Prostate gland (tissue), 2 donors: ENCODE measurements at regions of chr6 and their contacts with region 1.

Region 1: DNA sequence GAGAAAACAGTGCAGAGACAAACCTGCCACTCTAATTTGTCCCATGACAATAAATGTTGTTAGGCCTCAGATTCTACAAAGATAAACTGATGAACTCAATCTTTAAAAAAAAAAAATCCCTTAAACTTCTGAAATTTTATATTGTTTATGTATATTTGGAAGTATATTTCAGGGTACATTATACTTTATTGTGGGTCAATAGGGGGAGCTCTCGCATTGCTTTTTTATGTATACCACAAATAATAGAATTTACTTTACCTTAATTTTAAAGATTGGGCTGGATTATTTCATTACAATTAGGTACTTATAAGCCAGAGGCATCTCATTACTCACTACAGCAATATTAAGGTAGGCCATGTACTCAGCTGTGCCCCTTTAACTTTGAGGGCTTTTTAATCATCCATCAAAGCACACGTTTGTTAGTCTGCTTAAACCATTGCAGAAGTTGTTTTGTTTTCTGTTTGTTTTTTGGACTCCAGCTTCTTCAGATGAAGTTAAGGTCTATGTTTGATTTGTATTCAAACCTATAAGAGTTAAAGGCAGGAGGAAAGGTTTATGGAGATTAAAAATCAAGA is 56.3 kb upstream of the EYA4 start:
- DNase-seq: no peak
- H3K4me3 ChIP-seq: no peak overlapping the region
- H3K27ac ChIP-seq: no peak overlapping the region
- H3K4me1 ChIP-seq: no peaks in the 10 kb centered on the region
- H3K27me3 ChIP-seq: no peaks in the 10 kb centered on the region
- CTCF ChIP-seq: peak in 3 of 4 experiments; percentile 29 to 35 (median 34)
- POLR2A ChIP-seq: no peak

Region 2: GRCh38 chr6:132830334-132830751 is 354.5 kb before region 1 on chr6:
- intact Hi-C with region 1: loop called (anchors 10 kb)
- DNase-seq: no peak
- H3K4me3 ChIP-seq: no peak overlapping the region
- H3K27ac ChIP-seq: no peak overlapping the region
- H3K4me1 ChIP-seq: no peaks in the 10 kb centered on the region
- H3K27me3 ChIP-seq: no peaks in the 10 kb centered on the region
- CTCF ChIP-seq: peak in 3 of 4 experiments; percentile 36 to 55 (median 53)
- POLR2A ChIP-seq: no peak

Region 3: DNA sequence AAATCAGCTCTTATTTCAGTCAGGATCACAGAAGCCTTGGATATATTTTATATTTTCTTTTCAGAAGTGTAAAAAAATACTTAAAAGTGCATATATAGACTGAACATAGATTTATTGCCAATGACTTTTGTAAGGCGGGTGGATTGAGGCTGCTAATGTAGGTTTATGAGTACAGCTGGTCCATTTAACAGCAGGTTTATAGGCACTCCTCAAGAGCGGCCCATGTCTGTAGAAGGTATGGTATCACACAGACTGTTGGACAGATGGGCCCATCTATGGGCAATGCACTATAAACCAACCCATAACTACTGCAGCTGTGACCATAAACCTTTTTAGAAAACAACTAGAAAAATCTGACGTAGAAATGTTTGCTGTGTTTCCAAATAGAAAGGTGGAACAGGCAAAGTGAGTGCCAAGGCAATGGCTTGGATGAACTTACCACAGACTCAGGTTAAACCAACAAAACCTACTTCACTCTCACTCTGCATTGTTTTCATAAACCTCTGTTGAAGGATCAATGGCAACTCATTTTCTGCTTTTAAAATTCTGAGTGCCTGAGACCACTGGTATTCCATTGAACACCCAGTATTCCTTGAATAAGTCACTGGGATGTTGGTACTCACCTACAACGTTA is 114.4 kb before region 1 on chr6:
- intact Hi-C with region 1: no loop called
- DNase-seq: peak; percentile 30
- H3K4me3 ChIP-seq: no peak overlapping the region
- H3K27ac ChIP-seq: peak overlapping the region in 1 of 2 donors; percentile 26
- H3K4me1 ChIP-seq: no peaks in the 10 kb centered on the region
- H3K27me3 ChIP-seq: no peaks in the 10 kb centered on the region
- CTCF ChIP-seq: no peak
- POLR2A ChIP-seq: no peak

Region 4: DNA sequence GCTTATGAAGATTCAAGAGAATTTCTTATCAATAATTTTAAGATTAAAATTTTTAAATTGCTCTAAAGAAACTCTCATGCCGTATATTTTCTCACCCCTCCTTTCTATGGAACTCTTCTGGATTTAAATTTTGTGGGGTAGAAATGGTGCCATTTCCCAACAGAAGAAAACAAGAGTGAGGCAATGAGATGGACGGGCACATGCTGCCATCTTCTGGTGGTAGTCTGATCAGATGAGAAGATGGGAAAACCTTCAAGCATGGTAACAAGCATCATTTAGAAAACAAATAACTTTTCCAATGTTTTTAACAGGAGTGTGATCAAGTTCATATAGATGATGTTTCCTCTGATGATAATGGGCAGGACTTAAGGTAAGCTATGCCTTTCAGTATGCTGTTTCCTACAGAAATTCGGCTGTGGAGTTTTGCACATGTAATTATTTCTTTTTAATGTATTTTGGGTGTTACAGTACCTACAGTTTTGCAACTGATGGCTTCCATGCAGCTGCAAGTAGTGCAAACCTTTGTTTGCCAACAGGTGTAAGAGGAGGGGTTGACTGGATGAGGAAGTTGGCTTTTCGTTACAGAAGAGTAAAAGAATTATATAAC is 327.6 kb after region 1 on chr6:
- intact Hi-C with region 1: loop called (anchors 5 kb)
- DNase-seq: peak; percentile 29
- H3K4me3 ChIP-seq: no peak overlapping the region
- H3K27ac ChIP-seq: no peak overlapping the region
- H3K4me1 ChIP-seq: no peaks in the 10 kb centered on the region
- H3K27me3 ChIP-seq: no peaks in the 10 kb centered on the region
- CTCF ChIP-seq: peak in 3 of 4 experiments; percentile 42 to 61 (median 61)
- POLR2A ChIP-seq: no peak

Region 5: DNA sequence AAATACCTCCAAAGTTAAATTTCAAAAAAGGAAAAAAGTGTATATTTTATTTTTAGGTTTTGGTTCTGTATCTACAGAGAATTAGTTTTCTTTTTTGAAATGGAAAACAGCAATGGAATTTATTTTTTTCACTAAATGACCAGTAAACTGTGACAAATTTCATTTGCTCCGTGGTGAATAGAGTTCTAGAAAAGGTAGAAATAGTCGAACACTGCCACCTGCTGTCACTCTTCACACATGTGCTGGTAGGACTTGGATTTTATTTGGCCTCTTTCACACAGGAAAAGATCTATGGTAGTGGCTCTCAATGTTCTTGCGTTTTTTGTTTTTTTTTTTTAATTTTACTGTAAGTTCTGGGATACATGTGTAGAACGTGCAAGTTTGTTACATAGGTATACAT is 368.8 kb after region 1 on chr6:
- intact Hi-C with region 1: loop called (anchors 5 kb)
- DNase-seq: peak; percentile 19
- H3K4me3 ChIP-seq: no peak overlapping the region
- H3K27ac ChIP-seq: no peak overlapping the region
- H3K4me1 ChIP-seq: no peaks in the 10 kb centered on the region
- H3K27me3 ChIP-seq: no peaks in the 10 kb centered on the region
- CTCF ChIP-seq: peak in 3 of 4 experiments; percentile 55 to 59 (median 55)
- POLR2A ChIP-seq: no peak